Activated B cell treated with CpG ODN at 0.5 μM for 24 hours (primary cell): ENCODE measurements at regions of chrX and their contacts with region 1.

Region 1: GRCh38 chrX:7110821-7111276 is 36.7 kb upstream of the STS start:
- DNase-seq: no peak
- ATAC-seq: peak; percentile 78
- H3K4me3 Mint-ChIP-seq: peak overlapping the region; percentile 74
- H3K27ac Mint-ChIP-seq: peak overlapping the region; percentile 93
- H3K4me1 Mint-ChIP-seq: peaks cover 44% of the 10 kb centered on the region
- H3K27me3 Mint-ChIP-seq: no peaks in the 10 kb centered on the region
- CTCF ChIP-seq: no peak

Region 2: DNA sequence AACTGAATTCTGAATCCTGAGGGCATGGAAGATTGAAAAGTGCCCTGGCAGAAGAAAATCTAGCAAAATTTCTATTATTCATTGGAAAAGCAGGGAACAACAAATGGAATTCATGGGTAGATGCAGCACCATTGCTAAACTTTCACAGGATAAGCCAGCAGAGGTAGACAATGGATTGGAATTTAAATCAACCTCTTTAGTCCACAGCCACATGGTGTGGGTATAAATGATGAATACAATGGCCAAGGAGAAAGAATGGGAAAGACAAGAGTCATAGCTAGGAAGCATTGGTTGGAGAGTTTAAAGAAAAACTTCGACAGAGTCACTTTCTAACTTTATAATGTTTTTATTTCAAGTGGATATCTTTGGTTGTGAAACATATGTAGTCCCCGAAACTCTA is 369.9 kb after region 1 on chrX:
- CTCF ChIA-PET with region 1: no interaction called
- POLR2A ChIA-PET with region 1: no interaction called
- intact Hi-C with region 1: no loop called
- DNase-seq: no peak
- ATAC-seq: no peak
- H3K4me3 Mint-ChIP-seq: no peak overlapping the region
- H3K27ac Mint-ChIP-seq: no peak overlapping the region
- H3K4me1 Mint-ChIP-seq: no peaks in the 10 kb centered on the region
- H3K27me3 Mint-ChIP-seq: no peaks in the 10 kb centered on the region
- CTCF ChIP-seq: no peak

Region 3: GRCh38 chrX:7925867-7926472 is 815.1 kb after region 1 on chrX:
- CTCF ChIA-PET with region 1: no interaction called
- POLR2A ChIA-PET with region 1: interaction called, 3 read pairs
- intact Hi-C with region 1: loop called (anchors 1 kb)
- DNase-seq: no peak
- ATAC-seq: no peak
- H3K4me3 Mint-ChIP-seq: peak overlapping the region; percentile 48
- H3K27ac Mint-ChIP-seq: peak overlapping the region; percentile 61
- H3K4me1 Mint-ChIP-seq: peaks cover 17% of the 10 kb centered on the region
- H3K27me3 Mint-ChIP-seq: no peaks in the 10 kb centered on the region
- CTCF ChIP-seq: no peak